ENCODE measurements at regions of chr1 and their contacts with region 1.

Region 1: GRCh38 chr1:89483010-89483756 is 41.4 kb upstream of the LRRC8B start:
- DNase-seq: peak; percentile 62 to 84 (median 70)
- H3K4me3 ChIP-seq: no peak overlapping the region
- H3K27ac ChIP-seq: no peak overlapping the region
- H3K4me1 ChIP-seq: no peaks in the 10 kb centered on the region
- H3K27me3 ChIP-seq: no peaks in the 10 kb centered on the region
- CTCF ChIP-seq: peak; percentile 49 to 71 (median 61)
- EP300 ChIP-seq: no peak
- POLR2A ChIP-seq: no peak

Region 2: GRCh38 chr1:89598450-89599331 is 115.5 kb after region 1 on chr1:
- intact Hi-C with region 1: loop called in 2 of 4 experiments (anchors 10 kb)
- DNase-seq: no peak
- H3K4me3 ChIP-seq: no peak overlapping the region
- H3K27ac ChIP-seq: no peak overlapping the region
- H3K4me1 ChIP-seq: peaks cover 4% of the 10 kb centered on the region
- H3K27me3 ChIP-seq: no peaks in the 10 kb centered on the region
- CTCF ChIP-seq: peak; percentile 22 to 44 (median 27)
- EP300 ChIP-seq: no peak
- POLR2A ChIP-seq: no peak

Region 3: DNA sequence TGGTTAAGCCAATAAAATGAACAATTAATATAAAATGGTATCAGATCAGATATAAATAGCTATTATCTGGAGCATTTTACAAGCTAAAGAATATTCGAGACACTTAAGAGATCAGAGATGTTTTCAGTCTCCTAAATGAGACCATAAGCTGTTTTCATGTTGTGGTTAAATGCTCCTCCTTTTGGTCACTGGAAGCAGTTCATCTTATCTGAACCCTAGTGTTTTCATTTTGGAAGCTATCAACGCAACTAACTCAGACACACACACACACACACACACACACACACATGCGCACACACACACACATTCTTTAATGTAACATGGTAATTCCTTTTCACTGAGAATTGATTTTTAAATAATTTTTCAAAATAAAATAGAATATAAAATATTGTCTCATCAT is 139.7 kb after region 1 on chr1:
- intact Hi-C with region 1: no loop called
- DNase-seq: no peak
- H3K4me3 ChIP-seq: no peak overlapping the region
- H3K27ac ChIP-seq: peak overlapping the region in 1 of 2 donors; percentile 5
- H3K4me1 ChIP-seq: peaks cover 4% of the 10 kb centered on the region
- H3K27me3 ChIP-seq: no peaks in the 10 kb centered on the region
- CTCF ChIP-seq: peak in 1 of 3 donors; percentile 24
- EP300 ChIP-seq: no peak
- POLR2A ChIP-seq: no peak

Region 4: GRCh38 chr1:89762779-89763648 is 279.8 kb after region 1 on chr1:
- intact Hi-C with region 1: loop called in 3 of 4 experiments (anchors 2 to 10 kb)
- DNase-seq: peak; percentile 74 to 88 (median 85)
- H3K4me3 ChIP-seq: peak overlapping the region; percentile 43
- H3K27ac ChIP-seq: no peak overlapping the region
- H3K4me1 ChIP-seq: no peaks in the 10 kb centered on the region
- H3K27me3 ChIP-seq: no peaks in the 10 kb centered on the region
- CTCF ChIP-seq: peak; percentile 88 to 90 (median 89)
- EP300 ChIP-seq: no peak
- POLR2A ChIP-seq: no peak

Measured in ovary (tissue), 10 donors.